ENCODE measurements at regions of chr9 and their contacts with region 1.

Region 1: GRCh38 chr9:97938081-97938644 is at the start of gene HEMGN:
- DNase-seq: no peak
- ATAC-seq: no peak
- total RNA-seq, gene HEMGN: 6.4 TPM

Region 2: GRCh38 chr9:98010445-98010844 is 72.3 kb after region 1 on chr9:
- intact Hi-C with region 1: no loop called
- DNase-seq: no peak
- ATAC-seq: peak; percentile 48

Region 3: GRCh38 chr9:98022447-98022846 is 84.3 kb after region 1 on chr9:
- intact Hi-C with region 1: loop called (anchors 10 kb)
- DNase-seq: no peak
- ATAC-seq: no peak